Activated naive CD4-positive, alpha-beta T cell treated with anti-CD3 and anti-CD28 coated beads for 36 hours (primary cell): ENCODE measurements at regions of chr1 and their contacts with region 1.

Region 1: GRCh38 chr1:147599362-147600118 is 58.2 kb downstream of the BCL9 start:
- DNase-seq: peak; percentile 97
- H3K4me3 Mint-ChIP-seq: peak overlapping the region; percentile 86
- H3K27ac Mint-ChIP-seq: peak overlapping the region; percentile 84
- H3K4me1 Mint-ChIP-seq: peaks cover 24% of the 10 kb centered on the region
- H3K27me3 Mint-ChIP-seq: no peaks in the 10 kb centered on the region

Region 2: GRCh38 chr1:147084273-147085096 is 515.1 kb before region 1 on chr1:
- CTCF ChIA-PET with region 1: no interaction called
- intact Hi-C with region 1: loop called (anchors 10 kb)
- DNase-seq: peak; percentile 96
- H3K4me3 Mint-ChIP-seq: peak overlapping the region; percentile 92
- H3K27ac Mint-ChIP-seq: peak overlapping the region; percentile 100
- H3K4me1 Mint-ChIP-seq: peaks cover 44% of the 10 kb centered on the region
- H3K27me3 Mint-ChIP-seq: peaks cover 35% of the 10 kb centered on the region

Region 3: DNA sequence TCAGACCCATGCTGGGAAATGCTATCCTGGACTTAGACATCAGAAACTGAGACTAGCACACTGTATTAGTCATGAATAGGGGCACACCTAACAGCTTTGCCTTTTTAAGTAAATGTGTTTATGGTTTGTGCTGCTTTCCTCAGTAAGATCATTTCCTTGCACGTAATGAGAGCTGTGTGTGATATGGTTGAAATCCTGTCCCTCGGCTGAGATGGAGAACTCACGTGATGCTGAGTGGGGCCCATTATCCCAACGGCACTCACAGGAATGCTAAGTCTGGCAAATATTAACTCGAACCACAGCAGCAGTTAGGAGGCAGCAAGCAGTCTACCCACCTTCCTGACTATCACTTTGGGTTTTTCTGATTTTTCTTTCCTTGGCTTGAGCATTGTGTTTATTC is 20.0 kb before region 1 on chr1:
- CTCF ChIA-PET with region 1: interaction called, 3 read pairs
- intact Hi-C with region 1: loop called (anchors 1 kb)
- DNase-seq: peak; percentile 16
- H3K4me3 Mint-ChIP-seq: peak overlapping the region; percentile 56
- H3K27ac Mint-ChIP-seq: peak overlapping the region; percentile 69
- H3K4me1 Mint-ChIP-seq: peaks cover 34% of the 10 kb centered on the region
- H3K27me3 Mint-ChIP-seq: peaks cover 14% of the 10 kb centered on the region

Region 4: GRCh38 chr1:147627435-147628110 is 28.0 kb after region 1 on chr1:
- CTCF ChIA-PET with region 1: interaction called, 9 read pairs
- intact Hi-C with region 1: loop called (anchors 1 kb)
- DNase-seq: peak; percentile 62
- H3K4me3 Mint-ChIP-seq: no peak overlapping the region
- H3K27ac Mint-ChIP-seq: no peak overlapping the region
- H3K4me1 Mint-ChIP-seq: peaks cover 25% of the 10 kb centered on the region
- H3K27me3 Mint-ChIP-seq: no peaks in the 10 kb centered on the region

Region 5: DNA sequence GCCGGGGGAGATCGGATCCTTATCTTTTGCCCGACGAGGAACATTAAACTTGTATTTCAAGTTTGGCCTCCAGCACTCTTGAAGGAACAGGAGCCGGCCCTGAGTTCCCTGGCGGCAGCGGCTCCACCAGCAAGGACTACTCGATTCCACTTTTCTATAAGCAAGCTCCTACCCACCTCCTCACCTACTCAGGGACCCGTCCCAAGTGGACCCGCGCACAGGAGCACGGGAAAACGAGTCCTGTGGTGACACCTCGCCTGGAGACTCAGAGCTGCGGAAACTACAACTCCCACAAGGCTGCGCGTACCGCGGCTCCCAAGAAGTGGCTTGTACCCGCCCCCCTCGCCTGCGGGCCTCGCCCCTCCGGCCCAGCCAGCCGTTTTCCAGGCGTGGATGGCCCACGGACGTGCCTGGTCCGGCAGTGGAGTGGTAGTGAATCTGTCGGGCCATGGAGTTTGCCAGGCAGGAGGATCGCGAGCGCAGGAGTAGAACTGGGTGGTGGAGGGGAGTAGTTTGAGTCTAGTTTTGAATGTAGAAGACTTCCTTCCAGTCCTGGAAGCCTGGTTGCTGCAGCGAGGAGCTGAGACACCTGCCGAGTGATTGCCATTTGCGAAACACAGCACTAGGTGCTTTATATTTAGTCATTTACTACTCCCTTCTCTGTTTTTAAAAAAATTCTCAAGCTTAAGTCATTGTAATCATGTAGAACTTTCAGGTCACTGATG is 70.9 kb after region 1 on chr1 and contains the start of gene ACP6:
- CTCF ChIA-PET with region 1: no interaction called
- intact Hi-C with region 1: loop called (anchors 5 kb)
- DNase-seq: peak; percentile 93
- H3K4me3 Mint-ChIP-seq: peak within 1 kb of the TSS; percentile 85
- H3K27ac Mint-ChIP-seq: peak within 1 kb of the TSS; percentile 76
- H3K4me1 Mint-ChIP-seq: peaks cover 16% of the 10 kb centered on the region
- H3K27me3 Mint-ChIP-seq: no peaks in the 10 kb centered on the region
- total RNA-seq, gene ACP6: 14.4 to 16.3 TPM

Region 6: GRCh38 chr1:147700042-147701006 is 100.8 kb after region 1 on chr1:
- CTCF ChIA-PET with region 1: no interaction called
- intact Hi-C with region 1: no loop called
- DNase-seq: peak; percentile 78
- H3K4me3 Mint-ChIP-seq: no peak overlapping the region
- H3K27ac Mint-ChIP-seq: no peak overlapping the region
- H3K4me1 Mint-ChIP-seq: peaks cover 6% of the 10 kb centered on the region
- H3K27me3 Mint-ChIP-seq: no peaks in the 10 kb centered on the region